A549 (cell line): ENCODE measurements at regions of chr1 and their contacts with region 1.

Region 1: GRCh38 chr1:23634842-23635651 is 56.6 kb upstream of the RPL11 start:
- DNase-seq: peak; percentile 77 to 86
- ATAC-seq: peak; percentile 77 to 80
- H3K4me3 ChIP-seq: peak overlapping the region; percentile 37
- H3K27ac ChIP-seq: peak overlapping the region; percentile 91 to 95
- H3K4me1 ChIP-seq: peaks cover 40% of the 10 kb centered on the region
- CTCF ChIP-seq: peak; percentile 70
- EP300 ChIP-seq: no peak
- POLR2A ChIP-seq: no peak
- RAD21 ChIP-seq: peak; percentile 78 to 81

Region 2: GRCh38 chr1:23459338-23459757 is 175.7 kb before region 1 on chr1:
- CTCF ChIA-PET with region 1: no interaction called
- POLR2A ChIA-PET with region 1: no interaction called
- DNase-seq: no peak
- ATAC-seq: no peak
- H3K4me3 ChIP-seq: no peak overlapping the region
- H3K27ac ChIP-seq: no peak overlapping the region
- H3K4me1 ChIP-seq: no peaks in the 10 kb centered on the region
- CTCF ChIP-seq: no peak
- EP300 ChIP-seq: no peak
- POLR2A ChIP-seq: no peak
- RAD21 ChIP-seq: no peak

Region 3: DNA sequence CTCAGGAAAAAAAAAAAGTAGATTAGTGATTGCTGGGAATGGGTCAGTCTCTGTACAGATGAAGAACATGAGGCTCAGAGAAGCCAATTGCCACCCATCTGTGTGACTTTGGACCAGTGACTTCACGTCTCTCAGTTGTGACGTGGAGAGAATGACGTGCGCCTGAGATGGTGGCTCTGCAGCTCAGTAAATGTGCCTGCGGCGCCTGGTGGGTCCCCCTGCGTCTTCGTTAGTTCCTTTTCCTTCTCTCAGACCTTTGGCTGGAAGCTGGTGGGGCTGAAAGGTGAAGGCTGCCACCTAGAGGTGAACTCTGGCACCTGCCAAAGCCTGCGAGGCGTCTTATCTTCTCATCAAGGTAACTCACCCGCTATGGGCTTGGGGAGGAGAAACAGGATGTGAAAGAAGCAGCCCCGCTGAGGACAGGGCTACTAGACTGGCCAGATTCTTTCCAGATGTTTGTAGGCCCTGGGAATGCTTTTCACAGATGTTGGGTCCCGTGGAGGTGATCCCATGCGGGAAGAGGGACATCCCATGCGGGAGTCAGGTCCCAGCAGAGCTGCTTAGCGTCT is 95.3 kb before region 1 on chr1:
- CTCF ChIA-PET with region 1: interaction called, 699 read pairs
- POLR2A ChIA-PET with region 1: interaction called, 12 read pairs
- DNase-seq: peak; percentile 91 to 92
- ATAC-seq: peak; percentile 93 to 98
- H3K4me3 ChIP-seq: no peak overlapping the region
- H3K27ac ChIP-seq: peak overlapping the region; percentile 56 to 77
- H3K4me1 ChIP-seq: peaks cover 15% of the 10 kb centered on the region
- CTCF ChIP-seq: peak; percentile 81
- EP300 ChIP-seq: no peak
- POLR2A ChIP-seq: no peak
- RAD21 ChIP-seq: peak; percentile 92 to 95

Region 4: DNA sequence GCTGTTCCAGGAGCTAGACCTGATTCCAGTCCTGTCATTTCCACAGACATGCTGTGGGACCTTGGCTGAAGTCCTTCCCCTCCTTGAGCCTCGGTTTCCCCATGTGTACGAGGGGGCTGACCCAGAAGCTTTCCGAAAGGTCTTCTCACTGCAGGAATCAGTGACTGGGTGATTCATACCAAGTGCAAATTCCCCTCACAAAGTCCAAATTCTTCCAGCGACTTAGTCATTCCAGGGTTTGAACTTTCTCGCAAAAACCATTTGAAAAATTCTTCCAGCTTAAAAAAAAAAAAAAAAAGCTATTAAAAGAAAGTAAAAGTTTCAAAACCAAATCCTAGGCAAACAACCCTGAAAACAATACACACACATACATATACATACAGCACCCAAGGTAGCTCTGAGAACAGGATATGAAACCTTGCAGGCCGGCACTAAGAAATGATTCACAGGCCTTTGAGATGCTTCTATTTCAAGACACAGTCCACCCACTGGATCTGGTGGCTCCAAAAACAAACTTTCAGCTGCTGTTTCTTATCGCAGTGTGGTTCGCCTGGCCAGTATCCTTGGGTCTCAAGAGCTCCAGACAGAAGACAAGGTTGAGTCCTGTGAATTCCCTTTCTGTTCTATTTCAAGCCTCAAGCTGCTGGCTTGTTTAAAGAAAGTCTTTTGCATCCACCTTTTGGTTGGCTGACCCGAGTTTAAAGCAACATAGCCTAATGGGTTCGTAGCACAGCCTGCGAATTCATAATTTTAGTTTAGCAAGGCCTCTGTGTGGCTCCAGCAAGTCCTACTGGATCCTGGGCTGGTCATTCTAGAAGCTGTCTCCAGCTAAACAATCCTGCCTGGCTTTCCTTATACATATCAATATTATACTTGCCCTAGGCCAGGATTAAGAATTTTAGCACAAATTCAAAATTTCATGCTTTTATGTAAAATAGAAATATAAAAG is 57.7 kb before region 1 on chr1:
- CTCF ChIA-PET with region 1: interaction called, 25 read pairs
- POLR2A ChIA-PET with region 1: interaction called, 10 read pairs
- DNase-seq: peak in 1 of 2 experiments; percentile 85
- ATAC-seq: peak; percentile 90 to 93
- H3K4me3 ChIP-seq: peak overlapping the region; percentile 16; the same call in 2 of the 3 replicates
- H3K27ac ChIP-seq: peak overlapping the region; percentile 96 to 100
- H3K4me1 ChIP-seq: peaks cover 67% of the 10 kb centered on the region
- CTCF ChIP-seq: no peak
- EP300 ChIP-seq: peak; percentile 69 to 82; a peak in 4 of 5 replicates
- POLR2A ChIP-seq: no peak
- RAD21 ChIP-seq: peak in 1 of 2 experiments; percentile 1; a peak in 2 of 5 replicates

Region 5: DNA sequence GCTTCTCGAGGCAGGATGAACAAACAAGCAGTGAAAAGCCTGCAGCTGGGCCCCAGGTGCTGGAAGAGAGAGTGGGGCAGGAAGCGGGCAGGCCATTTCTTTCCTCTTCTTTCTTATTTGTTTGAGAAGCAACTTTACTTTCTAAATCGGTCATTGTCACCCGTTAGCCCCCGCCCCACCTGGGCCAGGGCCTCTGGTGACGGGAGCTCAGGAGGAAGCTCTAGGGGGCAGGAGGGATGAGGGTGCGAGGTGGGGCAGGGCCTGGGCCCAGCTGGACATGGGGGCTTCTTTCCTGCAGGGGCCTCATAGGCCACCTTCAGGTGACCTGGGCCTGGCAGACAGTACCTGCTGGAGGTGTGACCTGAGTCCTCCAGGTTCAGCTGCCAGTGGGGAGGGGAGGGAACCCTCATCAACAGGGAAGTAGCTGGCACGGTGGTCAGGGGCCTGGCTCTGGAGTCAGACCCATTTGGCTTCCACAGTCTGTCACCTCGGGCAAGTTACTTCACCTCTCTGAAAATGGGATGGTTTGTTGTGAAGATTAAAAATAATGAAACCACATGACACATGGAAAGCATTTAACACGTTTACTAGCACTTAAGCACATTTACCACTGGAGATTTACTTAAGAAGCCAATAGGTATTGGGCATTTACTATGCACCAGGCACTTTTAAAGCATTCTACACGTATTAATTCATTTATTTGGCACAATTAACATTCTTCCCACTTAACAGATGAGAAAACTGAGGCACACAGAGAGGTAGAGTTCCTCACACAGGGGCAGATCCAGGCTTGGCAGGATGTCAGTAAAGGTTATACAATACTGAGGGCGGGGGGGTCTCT is 21.6 kb before region 1 on chr1:
- CTCF ChIA-PET with region 1: interaction called, 14 read pairs
- POLR2A ChIA-PET with region 1: no interaction called
- DNase-seq: no peak
- ATAC-seq: no peak
- H3K4me3 ChIP-seq: no peak overlapping the region
- H3K27ac ChIP-seq: peak overlapping the region in 1 of 2 experiments; percentile 60; a peak in 1 of 6 replicates
- H3K4me1 ChIP-seq: no peaks in the 10 kb centered on the region
- CTCF ChIP-seq: no peak
- EP300 ChIP-seq: no peak
- POLR2A ChIP-seq: no peak
- RAD21 ChIP-seq: no peak

Region 6: DNA sequence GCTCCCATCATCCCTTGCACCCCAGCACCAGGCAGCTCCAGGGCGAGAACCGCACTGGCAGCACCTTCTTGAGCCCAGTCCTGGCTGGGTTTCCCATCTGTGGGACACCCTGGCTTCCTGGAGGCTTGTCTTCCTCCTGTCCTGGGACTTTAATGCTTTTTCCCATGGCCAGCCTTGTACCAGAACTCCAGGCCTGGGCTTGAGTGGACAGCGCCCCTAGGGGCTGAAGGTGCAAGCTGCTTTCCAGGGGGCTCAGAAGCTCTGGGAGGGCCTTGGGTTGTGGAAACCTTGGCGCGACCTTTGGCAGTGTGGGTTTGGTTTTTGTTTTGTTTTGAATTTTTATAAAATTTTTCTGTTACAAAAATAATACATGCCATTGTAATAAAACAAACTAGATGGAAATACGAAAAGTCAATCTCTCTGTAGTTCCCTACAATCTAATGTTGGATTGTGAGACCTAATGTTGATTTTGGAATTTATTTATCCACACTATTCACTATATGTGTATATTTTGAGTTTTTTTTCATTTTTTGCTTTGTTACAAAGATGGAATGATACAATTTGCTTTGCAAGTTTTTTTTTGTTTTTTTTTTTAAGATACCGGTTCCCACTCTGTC is 22.7 kb after region 1 on chr1:
- CTCF ChIA-PET with region 1: interaction called, 13 read pairs
- POLR2A ChIA-PET with region 1: no interaction called
- DNase-seq: peak; percentile 60 to 63
- ATAC-seq: peak; percentile 87 to 97
- H3K4me3 ChIP-seq: no peak overlapping the region
- H3K27ac ChIP-seq: no peak overlapping the region
- H3K4me1 ChIP-seq: no peaks in the 10 kb centered on the region
- CTCF ChIP-seq: peak; percentile 56
- EP300 ChIP-seq: no peak
- POLR2A ChIP-seq: no peak
- RAD21 ChIP-seq: peak in 1 of 2 experiments; percentile 43; a peak in 2 of 5 replicates

Region 7: DNA sequence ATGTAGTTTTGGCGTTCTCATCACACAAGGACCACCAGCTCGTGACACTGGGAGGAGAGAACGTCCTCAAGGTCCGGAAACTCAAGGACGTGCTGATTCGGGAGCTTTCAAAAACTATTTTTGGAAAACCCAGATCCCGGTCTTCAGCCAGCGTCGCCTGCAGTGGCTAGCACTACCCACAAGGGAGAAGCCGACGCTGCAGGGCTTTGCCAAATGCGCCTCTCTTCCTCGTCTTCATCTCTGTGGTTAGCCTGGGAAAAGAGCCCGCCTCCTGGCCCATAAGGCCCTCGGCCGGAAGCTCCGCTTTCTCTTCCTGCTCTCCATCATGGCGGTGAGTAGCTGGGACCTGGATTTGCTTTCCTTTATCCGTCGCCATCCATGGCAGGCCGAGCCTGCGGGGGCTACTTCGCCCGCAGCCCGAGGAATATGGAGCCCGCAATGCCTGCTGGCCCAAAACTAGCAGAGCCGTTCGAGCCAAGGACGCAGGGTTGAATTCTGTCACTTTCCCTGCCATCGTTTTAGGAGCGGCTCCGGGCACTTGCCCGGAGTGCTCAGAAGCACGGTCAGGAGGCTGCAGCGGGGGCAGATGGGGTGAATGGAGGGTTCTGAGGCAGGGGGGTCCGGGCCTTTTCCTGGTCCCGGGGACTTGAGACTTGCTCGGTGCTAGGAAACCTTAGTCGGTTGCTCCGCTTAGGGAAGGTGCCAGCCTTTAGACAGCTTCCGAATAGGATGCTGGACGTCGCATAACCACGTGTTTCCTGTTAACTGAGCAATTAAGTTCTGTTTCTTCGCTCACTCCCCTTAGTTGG is 56.7 kb after region 1 on chr1 and contains the start of gene RPL11:
- CTCF ChIA-PET with region 1: interaction called, 13 read pairs
- POLR2A ChIA-PET with region 1: interaction called, 3 read pairs
- DNase-seq: peak; percentile 83 to 95
- ATAC-seq: peak; percentile 99
- H3K4me3 ChIP-seq: peak within 1 kb of the TSS; percentile 97
- H3K27ac ChIP-seq: peak within 1 kb of the TSS; percentile 83 to 98
- H3K4me1 ChIP-seq: peaks cover 37% of the 10 kb centered on the region
- CTCF ChIP-seq: peak; percentile 38
- EP300 ChIP-seq: no peak
- POLR2A ChIP-seq: peak; percentile 76
- RAD21 ChIP-seq: 0 out of 5 replicates have a peak, but pooled peaks of 1 of the 2 experiments have one; percentile 26
- polyA plus RNA-seq, gene RPL11: 979 and 1,292 TPM in 2 replicates

Region 8: GRCh38 chr1:23784846-23785245 is 149.8 kb after region 1 on chr1:
- CTCF ChIA-PET with region 1: no interaction called
- POLR2A ChIA-PET with region 1: no interaction called
- DNase-seq: no peak
- ATAC-seq: no peak
- H3K4me3 ChIP-seq: no peak overlapping the region
- H3K27ac ChIP-seq: no peak overlapping the region
- H3K4me1 ChIP-seq: peaks cover 18% of the 10 kb centered on the region
- CTCF ChIP-seq: no peak
- EP300 ChIP-seq: no peak
- POLR2A ChIP-seq: no peak
- RAD21 ChIP-seq: no peak

Region 9: GRCh38 chr1:24126018-24126671 is 491.1 kb after region 1 on chr1:
- CTCF ChIA-PET with region 1: no interaction called
- POLR2A ChIA-PET with region 1: no interaction called
- DNase-seq: no peak
- ATAC-seq: no peak
- H3K4me3 ChIP-seq: no peak overlapping the region
- H3K27ac ChIP-seq: no peak overlapping the region
- H3K4me1 ChIP-seq: no peaks in the 10 kb centered on the region
- CTCF ChIP-seq: no peak
- EP300 ChIP-seq: no peak
- POLR2A ChIP-seq: no peak
- RAD21 ChIP-seq: no peak